PC-9 (cell line): ENCODE measurements at regions of chr4 and their contacts with region 1.

Region 1: DNA sequence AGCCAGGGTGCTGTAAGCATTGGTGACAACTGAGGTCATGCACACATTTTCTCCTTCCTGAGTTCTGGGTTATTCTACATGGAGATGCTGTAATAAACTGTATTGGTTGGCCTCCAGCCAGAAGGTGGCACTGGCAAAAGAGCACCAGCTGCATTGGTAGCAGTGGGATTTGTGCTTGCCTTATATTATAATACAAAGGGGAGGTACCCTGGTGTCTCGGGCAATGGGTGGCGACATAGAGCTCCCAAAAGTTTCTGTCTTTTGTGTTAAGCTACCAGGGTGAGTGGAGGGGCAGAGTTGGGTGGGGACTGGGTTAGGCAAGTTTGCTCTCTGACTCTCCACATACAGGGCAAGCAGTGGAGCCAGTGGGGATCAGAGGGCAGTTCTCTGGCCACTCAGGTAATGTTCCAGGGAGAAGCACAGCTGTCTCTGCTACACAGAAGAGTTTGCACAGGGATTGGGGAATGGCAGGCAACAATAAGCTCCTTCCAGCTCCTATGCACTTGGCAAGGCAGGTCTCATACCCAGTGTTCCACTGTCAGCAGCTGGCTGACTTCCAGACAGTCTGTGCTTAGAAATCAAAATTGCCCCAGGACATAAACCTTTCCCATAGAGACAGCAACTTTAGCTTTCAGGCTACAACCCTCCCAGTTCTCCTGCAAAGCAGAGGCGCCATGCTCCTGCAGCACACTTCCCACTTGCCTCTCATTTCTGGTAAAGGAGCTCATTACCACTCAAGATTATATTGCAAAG is 463.9 kb upstream of the PCDH7 start:
- DNase-seq: peak in 1 of 2 experiments; percentile 8
- H3K4me3 ChIP-seq: no peak overlapping the region
- H3K27ac ChIP-seq: no peak overlapping the region
- H3K4me1 ChIP-seq: no peaks in the 10 kb centered on the region
- H3K27me3 ChIP-seq: no peaks in the 10 kb centered on the region
- CTCF ChIP-seq: no peak

Region 2: DNA sequence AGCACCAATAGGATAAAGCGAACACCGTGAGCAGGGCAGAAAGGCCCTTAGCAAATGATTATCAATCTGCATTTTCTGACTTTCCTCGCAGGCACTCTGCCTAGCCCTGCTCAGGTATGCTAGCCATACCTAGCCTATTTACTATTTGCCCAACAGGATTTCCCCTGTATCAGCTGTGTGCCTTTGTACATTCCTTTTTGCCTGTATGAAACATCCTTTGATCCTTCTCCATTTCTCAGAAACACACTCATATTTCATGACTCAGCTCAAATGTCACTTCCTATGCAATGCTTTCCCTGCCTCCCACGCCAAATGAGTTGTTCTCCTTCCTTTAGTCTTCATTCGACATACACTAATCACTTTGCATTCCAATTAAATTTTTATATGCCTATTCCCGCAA is 501.1 kb after region 1 on chr4:
- CTCF ChIA-PET with region 1: no interaction called
- POLR2A ChIA-PET with region 1: no interaction called
- intact Hi-C with region 1: no loop called
- DNase-seq: peak; percentile 52 to 89
- H3K4me3 ChIP-seq: peak overlapping the region; percentile 4; the same call in 1 of the 2 replicates
- H3K27ac ChIP-seq: peak overlapping the region; percentile 83
- H3K4me1 ChIP-seq: peaks cover 44% of the 10 kb centered on the region
- H3K27me3 ChIP-seq: no peaks in the 10 kb centered on the region
- CTCF ChIP-seq: no peak

Region 3: GRCh38 chr4:31918891-31919290 is 1662.6 kb after region 1 on chr4:
- CTCF ChIA-PET with region 1: no interaction called
- POLR2A ChIA-PET with region 1: interaction called, 13 read pairs
- intact Hi-C with region 1: no loop called
- DNase-seq: no peak
- H3K4me3 ChIP-seq: no peak overlapping the region
- H3K27ac ChIP-seq: no peak overlapping the region
- H3K4me1 ChIP-seq: no peaks in the 10 kb centered on the region
- H3K27me3 ChIP-seq: no peaks in the 10 kb centered on the region
- CTCF ChIP-seq: no peak